ENCODE measurements at regions of chr11 and their contacts with region 1.

Region 1: GRCh38 chr11:46322759-46323158 is 24.5 kb upstream of the DGKZ start:
- DNase-seq: peak in 1 of 2 experiments; percentile 52
- H3K4me3 ChIP-seq: no peak overlapping the region
- H3K4me1 ChIP-seq: no peaks in the 10 kb centered on the region
- H3K27me3 ChIP-seq: no peaks in the 10 kb centered on the region

Region 2: GRCh38 chr11:46176402-46176801 is 146.4 kb before region 1 on chr11:
- in situ Hi-C with region 1: no loop called
- DNase-seq: no peak
- H3K4me3 ChIP-seq: no peak overlapping the region
- H3K4me1 ChIP-seq: no peaks in the 10 kb centered on the region
- H3K27me3 ChIP-seq: no peaks in the 10 kb centered on the region; the same call in 1 of the 2 replicates

Region 3: DNA sequence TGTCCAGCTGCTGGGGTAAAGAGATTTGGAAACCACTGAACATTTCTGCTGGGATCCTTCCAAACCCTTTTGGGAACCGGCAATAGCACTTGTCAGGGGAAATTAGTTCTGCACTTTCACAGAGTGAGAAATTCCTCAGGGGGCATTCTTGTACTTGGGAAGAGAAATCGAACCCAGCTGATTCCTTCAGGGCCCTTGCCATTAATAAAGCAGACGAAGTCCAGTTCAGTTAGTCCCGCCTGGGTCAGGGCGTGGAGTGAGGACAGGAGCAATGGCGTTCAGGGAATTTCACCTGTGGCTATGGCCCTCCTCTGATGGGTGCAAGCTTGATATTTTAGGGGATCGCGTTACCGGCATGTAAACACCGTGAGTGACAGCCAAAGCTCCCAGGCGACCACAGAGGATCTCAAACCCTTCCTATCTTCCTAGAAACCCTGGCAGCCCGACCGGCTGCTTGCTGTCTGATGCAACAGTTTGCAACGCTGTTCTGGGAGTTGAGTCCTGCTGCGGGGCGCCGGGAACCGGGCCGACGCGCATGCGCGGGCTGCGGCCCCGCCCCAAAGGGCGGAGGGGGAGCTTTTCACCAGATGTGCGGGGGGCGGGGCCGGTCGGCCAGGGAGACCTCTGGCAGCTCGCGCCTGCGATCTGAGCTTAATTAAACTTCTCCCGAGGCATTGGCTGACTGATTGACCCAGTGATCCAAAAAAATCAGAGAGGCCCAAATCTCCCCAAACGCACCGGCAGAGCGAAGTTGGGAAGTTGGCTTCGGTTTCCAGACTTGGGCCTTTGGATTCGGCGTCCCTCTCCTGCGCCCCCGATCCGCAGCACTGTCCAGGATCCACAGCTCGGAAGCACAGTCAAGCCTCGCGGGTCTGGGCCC is 79.6 kb before region 1 on chr11:
- in situ Hi-C with region 1: loop called (anchors 5 kb)
- DNase-seq: peak; percentile 91 to 98
- H3K4me3 ChIP-seq: peak overlapping the region; percentile 46
- H3K4me1 ChIP-seq: peaks cover 39% of the 10 kb centered on the region
- H3K27me3 ChIP-seq: no peaks in the 10 kb centered on the region